ENCODE measurements at regions of chr2 and their contacts with region 1.

Region 1: DNA sequence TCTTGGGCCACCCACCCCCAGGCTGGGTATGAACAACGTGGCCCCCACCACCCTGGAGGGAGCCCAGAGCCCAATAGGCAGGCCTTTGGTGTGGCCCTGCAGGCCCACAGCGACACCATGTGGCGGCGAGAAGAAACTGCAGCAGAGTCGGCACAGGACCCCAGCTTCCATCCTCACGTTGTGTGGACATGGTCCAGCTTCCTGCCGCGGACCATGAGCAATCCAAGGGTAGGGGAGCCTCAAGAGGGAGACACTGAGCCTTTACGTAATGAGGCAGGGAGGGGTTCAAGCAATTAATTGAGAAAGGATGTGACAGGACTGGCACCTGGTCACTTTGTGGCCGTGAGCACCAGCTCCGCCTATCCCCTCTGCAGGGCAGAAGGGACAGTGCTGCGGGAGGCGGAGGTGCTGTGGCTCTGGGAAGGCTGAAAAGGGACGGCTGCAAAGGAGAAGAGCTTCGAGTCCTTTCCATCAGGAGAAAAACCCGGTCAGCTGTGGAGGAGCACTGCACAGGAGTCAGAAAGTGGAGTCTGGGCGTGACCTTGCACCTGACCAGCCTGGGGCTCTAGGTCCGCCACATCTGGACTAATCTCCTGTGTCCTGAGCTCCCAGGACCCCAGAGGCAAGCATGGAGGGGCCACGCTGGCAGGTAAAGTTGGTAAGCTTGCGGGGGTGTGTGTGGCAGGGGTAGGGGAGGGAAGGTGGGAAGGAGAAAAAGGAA is 44.8 kb downstream of the TMEM37 start:
- DNase-seq: peak; percentile 72 to 87 (median 82)
- ATAC-seq: peak; percentile 96
- H3K4me3 ChIP-seq: no peak overlapping the region
- H3K27ac ChIP-seq: no peak overlapping the region
- H3K4me1 ChIP-seq: peaks cover 4 to 5% of the 10 kb centered on the region in 2 experiments; a peak in 3 of 5 replicates
- H3K27me3 ChIP-seq: peaks cover 6 to 62% of the 10 kb centered on the region in 2 experiments; a peak in 4 of 5 replicates
- CTCF ChIP-seq: peak; percentile 90 to 94 (median 93)
- EP300 ChIP-seq: no peak
- POLR2A ChIP-seq: no peak
- RAD21 ChIP-seq: peak; percentile 96

Region 2: DNA sequence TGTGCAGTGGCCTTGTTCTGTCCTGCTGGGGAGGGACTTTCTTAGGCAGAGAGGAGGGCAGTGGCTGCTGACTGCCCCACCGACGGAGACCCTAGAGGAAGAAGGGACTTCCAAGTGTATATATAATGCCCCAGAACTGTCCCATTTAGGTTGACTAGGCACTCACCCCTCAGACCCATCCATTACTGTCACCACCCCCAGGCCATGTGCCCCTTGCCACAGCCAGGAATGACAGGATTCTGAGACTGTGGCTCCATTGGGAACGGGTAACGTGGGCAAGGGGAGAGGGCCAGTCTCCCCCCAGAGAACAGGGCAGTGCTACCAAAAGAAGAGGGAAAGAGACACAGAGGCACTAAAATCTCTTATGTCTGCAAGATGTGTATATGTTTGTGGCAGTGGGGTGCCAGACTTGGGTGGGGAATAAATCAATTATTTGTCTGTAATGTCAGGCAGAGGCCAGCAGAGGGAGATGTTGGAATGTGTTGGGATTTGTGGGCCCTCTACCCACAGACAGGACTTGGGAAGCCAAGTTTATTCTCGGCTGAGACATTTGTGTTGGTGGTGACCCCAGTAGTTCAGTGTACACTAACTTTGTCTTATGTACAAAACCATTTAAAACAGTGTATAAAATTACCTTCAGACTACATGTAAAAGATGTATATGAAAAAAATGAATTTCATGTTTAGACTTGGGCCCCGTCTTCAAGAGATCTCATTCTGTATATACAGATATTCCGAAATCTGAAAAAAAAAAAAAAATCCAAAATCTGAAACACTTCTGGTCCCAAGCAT is 68.8 kb before region 1 on chr2:
- CTCF ChIA-PET with region 1: interaction called, 56 read pairs
- POLR2A ChIA-PET with region 1: no interaction called
- in situ Hi-C with region 1: no loop called
- intact Hi-C with region 1: loop called (anchors 1 kb)
- DNase-seq: peak; percentile 71 to 78 (median 74)
- ATAC-seq: peak; percentile 89
- H3K4me3 ChIP-seq: no peak overlapping the region
- H3K27ac ChIP-seq: no peak overlapping the region
- H3K4me1 ChIP-seq: no peaks in the 10 kb centered on the region; a peak in 1 of 5 replicates
- H3K27me3 ChIP-seq: peaks cover 0 to 27% of the 10 kb centered on the region in 2 experiments; a peak in 2 of 5 replicates
- CTCF ChIP-seq: peak; percentile 78 to 93 (median 79)
- EP300 ChIP-seq: no peak
- POLR2A ChIP-seq: no peak
- RAD21 ChIP-seq: peak; percentile 95

Measured in K562 (cell line).